ENCODE measurements at regions of chr14 and their contacts with region 1.

Region 1: DNA sequence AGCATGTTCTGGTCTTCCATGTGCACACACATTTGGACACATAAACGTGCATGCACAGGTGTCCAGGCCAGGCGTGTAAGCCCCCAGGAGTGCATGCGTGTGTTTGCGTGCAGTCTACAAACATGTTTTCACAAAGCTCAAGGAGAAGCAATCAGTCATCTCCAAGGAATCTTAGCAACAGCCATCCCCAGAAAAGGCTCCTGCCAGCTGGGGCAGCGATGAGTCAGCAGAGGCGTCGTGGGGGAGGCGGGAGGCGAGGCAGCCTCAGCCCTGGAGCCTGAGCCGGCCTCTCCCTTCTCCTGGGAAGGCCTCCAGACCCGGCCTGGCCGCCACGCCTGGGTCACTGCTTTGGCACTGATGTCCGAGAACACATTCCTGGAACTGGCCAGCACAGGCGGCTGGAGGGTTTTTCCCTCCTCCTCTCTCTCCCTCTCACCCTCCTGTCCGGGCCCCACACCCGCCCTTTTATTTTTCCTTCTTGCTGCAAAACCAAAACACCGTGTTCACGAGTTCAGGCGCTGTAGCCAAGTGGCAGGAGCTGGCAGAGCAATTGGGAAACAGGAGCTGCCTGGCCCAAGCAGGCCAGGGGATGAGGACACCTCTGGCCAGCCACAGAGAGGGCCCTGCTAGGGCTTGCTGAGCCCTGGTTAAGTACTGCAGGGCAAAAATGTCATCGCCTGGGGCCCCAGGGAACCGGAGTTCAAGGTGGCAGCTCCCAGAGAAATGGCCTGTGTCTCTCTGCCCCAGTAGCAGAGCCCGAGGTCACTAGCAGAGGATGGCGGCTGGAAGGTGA is 92.7 kb downstream of the LRRC74A start:
- DNase-seq: no peak
- H3K4me3 ChIP-seq: no peak overlapping the region
- H3K4me3 Mint-ChIP-seq: no peak overlapping the region
- H3K27ac ChIP-seq: no peak overlapping the region
- H3K27ac Mint-ChIP-seq: peak overlapping the region in 2 of 8 donors; percentile 50 to 58
- H3K4me1 ChIP-seq: peaks cover 17% of the 10 kb centered on the region
- H3K4me1 Mint-ChIP-seq: peaks cover 13 to 27% (median 24%) of the 10 kb centered on the region in 3 donors
- H3K27me3 ChIP-seq: no peaks in the 10 kb centered on the region
- H3K27me3 Mint-ChIP-seq: no peaks in the 10 kb centered on the region

Region 2: DNA sequence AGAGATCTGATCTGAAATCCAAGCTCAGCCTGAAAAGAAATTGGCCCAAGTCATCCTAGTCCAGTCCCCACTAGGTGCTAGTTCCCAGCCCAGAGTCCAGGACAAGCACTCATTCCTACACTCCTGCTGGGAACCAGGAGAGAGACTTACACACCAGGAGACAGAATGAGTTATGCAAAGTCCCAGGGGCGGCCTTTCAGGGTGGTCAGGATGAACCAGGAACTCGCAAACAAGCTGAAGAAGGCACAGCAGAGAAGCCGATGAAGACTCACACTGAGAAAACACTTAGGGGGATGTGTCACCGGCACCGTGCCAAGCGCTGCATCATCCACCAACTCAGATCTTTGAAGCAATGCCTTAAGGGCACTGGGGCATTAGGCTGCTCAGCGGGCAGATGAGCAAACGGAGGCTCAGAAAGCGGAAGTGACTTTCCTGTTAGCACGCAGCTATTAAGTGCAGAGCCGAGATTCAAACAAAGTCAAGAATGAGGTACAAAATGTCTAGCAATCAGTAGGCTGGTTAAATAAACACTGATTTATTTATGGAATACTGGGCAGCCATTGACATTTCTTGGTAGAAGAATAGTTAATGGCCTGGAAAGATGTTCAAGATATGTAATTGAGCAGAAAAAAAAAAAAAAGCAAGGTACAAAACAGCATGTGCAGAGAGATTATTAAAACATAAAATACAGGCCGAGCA is 14.1 kb before region 1 on chr14:
- CTCF ChIA-PET with region 1: interaction called, 13 read pairs
- POLR2A ChIA-PET with region 1: no interaction called
- DNase-seq: peak; percentile 22 to 81 (median 53)
- H3K4me3 ChIP-seq: no peak overlapping the region
- H3K4me3 Mint-ChIP-seq: peak overlapping the region in 6 of 7 donors; percentile 29 to 76 (median 66)
- H3K27ac ChIP-seq: no peak overlapping the region
- H3K27ac Mint-ChIP-seq: peak overlapping the region; percentile 13 to 93 (median 80)
- H3K4me1 ChIP-seq: peaks cover 28% of the 10 kb centered on the region
- H3K4me1 Mint-ChIP-seq: peaks cover 15 to 23% (median 23%) of the 10 kb centered on the region in 3 donors
- H3K27me3 ChIP-seq: no peaks in the 10 kb centered on the region
- H3K27me3 Mint-ChIP-seq: no peaks in the 10 kb centered on the region

Region 3: GRCh38 chr14:76956316-76957090 is 37.6 kb after region 1 on chr14:
- CTCF ChIA-PET with region 1: interaction called, 20 read pairs
- POLR2A ChIA-PET with region 1: interaction called, 9 read pairs
- DNase-seq: peak; percentile 82 to 91 (median 87)
- H3K4me3 ChIP-seq: peak overlapping the region; percentile 50
- H3K4me3 Mint-ChIP-seq: peak overlapping the region; percentile 86 to 95 (median 87)
- H3K27ac ChIP-seq: peak overlapping the region; percentile 94
- H3K27ac Mint-ChIP-seq: peak overlapping the region; percentile 95 to 100 (median 99)
- H3K4me1 ChIP-seq: peaks cover 50% of the 10 kb centered on the region
- H3K4me1 Mint-ChIP-seq: peaks cover 59 to 74% (median 65%) of the 10 kb centered on the region in 3 donors
- H3K27me3 ChIP-seq: no peaks in the 10 kb centered on the region
- H3K27me3 Mint-ChIP-seq: peaks cover 0 to 1% of the 10 kb centered on the region in 2 donors

Region 4: GRCh38 chr14:77028384-77029231 is 109.7 kb after region 1 on chr14 and contains the start of gene IRF2BPL:
- CTCF ChIA-PET with region 1: interaction called, 23 read pairs
- POLR2A ChIA-PET with region 1: interaction called, 3 read pairs
- DNase-seq: peak; percentile 89 to 97 (median 93)
- H3K4me3 ChIP-seq: peak within 1 kb of the TSS; percentile 72
- H3K4me3 Mint-ChIP-seq: peak within 1 kb of the TSS; percentile 91 to 96 (median 94)
- H3K27ac ChIP-seq: peak within 1 kb of the TSS; percentile 87
- H3K27ac Mint-ChIP-seq: peak within 1 kb of the TSS; percentile 94 to 100 (median 98)
- H3K4me1 ChIP-seq: peaks cover 69% of the 10 kb centered on the region
- H3K4me1 Mint-ChIP-seq: peaks cover 51 to 69% (median 58%) of the 10 kb centered on the region in 3 donors
- H3K27me3 ChIP-seq: no peaks in the 10 kb centered on the region
- H3K27me3 Mint-ChIP-seq: peaks cover 0 to 3% of the 10 kb centered on the region in 2 donors
- total RNA-seq, gene IRF2BPL: 25.6 to 27.2 TPM

Region 5: GRCh38 chr14:77033622-77034521 is 114.9 kb after region 1 on chr14:
- CTCF ChIA-PET with region 1: interaction called, 14 read pairs
- POLR2A ChIA-PET with region 1: no interaction called
- DNase-seq: peak; percentile 56 to 87 (median 76)
- H3K4me3 ChIP-seq: peak overlapping the region; percentile 78
- H3K4me3 Mint-ChIP-seq: peak overlapping the region; percentile 90 to 98 (median 91)
- H3K27ac ChIP-seq: peak overlapping the region; percentile 90
- H3K27ac Mint-ChIP-seq: peak overlapping the region; percentile 85 to 100 (median 98)
- H3K4me1 ChIP-seq: peaks cover 73% of the 10 kb centered on the region
- H3K4me1 Mint-ChIP-seq: peaks cover 68 to 83% (median 79%) of the 10 kb centered on the region in 3 donors
- H3K27me3 ChIP-seq: no peaks in the 10 kb centered on the region
- H3K27me3 Mint-ChIP-seq: peaks cover 0 to 2% of the 10 kb centered on the region in 2 donors

Region 6: DNA sequence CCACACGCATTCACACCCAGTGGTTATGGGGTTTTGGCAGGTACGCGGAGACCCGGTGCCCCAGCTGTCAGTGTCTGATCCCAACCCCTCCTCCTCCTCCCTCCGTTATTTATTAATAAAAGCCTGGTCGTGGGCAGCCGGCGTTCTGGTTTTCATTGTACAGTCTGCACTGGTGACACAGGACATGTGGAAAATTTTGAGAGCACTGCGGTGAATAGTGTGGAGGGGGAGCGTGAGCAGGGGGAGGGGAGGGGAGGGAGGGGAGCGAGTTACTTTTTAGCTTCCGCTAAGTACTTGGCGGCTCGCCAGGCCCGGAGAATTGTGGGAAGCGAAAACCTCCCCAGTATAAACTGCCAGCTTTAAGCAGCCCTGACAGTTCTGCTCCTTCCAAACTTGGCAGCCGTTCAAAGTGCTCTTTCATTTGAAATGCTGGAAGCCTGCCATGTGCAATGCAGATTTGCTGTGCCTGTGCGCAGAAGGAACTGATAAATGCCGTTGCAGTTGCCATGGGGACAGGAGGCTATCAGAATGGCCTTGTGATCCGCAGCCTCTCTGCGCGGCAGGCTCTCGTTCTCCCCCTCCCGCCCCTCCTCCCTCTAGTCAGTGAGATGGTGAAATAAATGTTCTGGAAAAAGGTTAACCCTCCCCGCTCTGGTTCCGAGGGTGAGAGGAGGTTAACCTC is 121.3 kb after region 1 on chr14:
- CTCF ChIA-PET with region 1: interaction called, 14 read pairs
- POLR2A ChIA-PET with region 1: interaction called, 4 read pairs
- DNase-seq: peak; percentile 93 to 99 (median 97)
- H3K4me3 ChIP-seq: peak overlapping the region; percentile 82
- H3K4me3 Mint-ChIP-seq: peak overlapping the region; percentile 84 to 92 (median 89)
- H3K27ac ChIP-seq: peak overlapping the region; percentile 89
- H3K27ac Mint-ChIP-seq: peak overlapping the region; percentile 95 to 100 (median 99)
- H3K4me1 ChIP-seq: peaks cover 80% of the 10 kb centered on the region
- H3K4me1 Mint-ChIP-seq: peaks cover 74 to 94% (median 89%) of the 10 kb centered on the region in 3 donors
- H3K27me3 ChIP-seq: no peaks in the 10 kb centered on the region
- H3K27me3 Mint-ChIP-seq: peaks cover 0 to 2% of the 10 kb centered on the region in 2 donors

Measured in CD8-positive, alpha-beta memory T cell (primary cell).